IMR-90 (cell line): ENCODE measurements at regions of chr16 and their contacts with region 1.

Region 1: DNA sequence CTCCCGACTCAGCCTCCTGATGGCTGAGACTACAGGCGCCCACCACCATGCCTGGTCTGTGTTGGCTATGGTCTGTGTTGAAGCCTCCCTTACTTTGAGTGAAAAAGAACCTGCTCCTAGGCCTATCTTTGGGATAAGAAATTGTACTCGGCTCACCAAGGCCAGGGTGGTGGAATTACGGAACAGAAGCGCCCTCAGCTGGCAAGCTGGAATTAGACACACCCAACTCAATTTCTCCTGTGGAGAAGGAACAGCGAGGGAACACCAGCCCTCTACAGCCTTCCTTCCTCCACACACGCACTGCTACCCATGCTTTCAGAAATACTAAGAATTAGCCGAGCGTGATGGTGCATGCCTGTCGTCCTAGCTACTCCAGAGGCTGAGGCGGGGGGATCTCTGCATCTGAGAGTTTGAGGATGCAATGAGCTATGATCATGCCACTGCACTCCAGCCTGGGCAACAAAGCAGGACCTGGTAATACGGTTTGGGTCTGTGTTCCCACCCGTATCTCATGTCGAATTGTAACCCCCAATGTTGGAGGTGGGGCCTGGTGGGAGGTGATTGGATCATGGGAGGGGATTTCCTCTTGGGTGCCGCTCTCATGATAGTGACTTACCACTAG is 40.1 kb upstream of the RBBP6 start:
- DNase-seq: peak; percentile 11
- ATAC-seq: peak; percentile 74
- H3K4me3 ChIP-seq: no peak overlapping the region
- H3K27ac ChIP-seq: no peak overlapping the region
- H3K4me1 ChIP-seq: no peaks in the 10 kb centered on the region
- H3K27me3 ChIP-seq: peaks cover 3% of the 10 kb centered on the region; the same call in 1 of the 2 replicates
- CTCF ChIP-seq: peak; percentile 50
- POLR2A ChIP-seq: no peak
- RAD21 ChIP-seq: peak; percentile 55

Region 2: DNA sequence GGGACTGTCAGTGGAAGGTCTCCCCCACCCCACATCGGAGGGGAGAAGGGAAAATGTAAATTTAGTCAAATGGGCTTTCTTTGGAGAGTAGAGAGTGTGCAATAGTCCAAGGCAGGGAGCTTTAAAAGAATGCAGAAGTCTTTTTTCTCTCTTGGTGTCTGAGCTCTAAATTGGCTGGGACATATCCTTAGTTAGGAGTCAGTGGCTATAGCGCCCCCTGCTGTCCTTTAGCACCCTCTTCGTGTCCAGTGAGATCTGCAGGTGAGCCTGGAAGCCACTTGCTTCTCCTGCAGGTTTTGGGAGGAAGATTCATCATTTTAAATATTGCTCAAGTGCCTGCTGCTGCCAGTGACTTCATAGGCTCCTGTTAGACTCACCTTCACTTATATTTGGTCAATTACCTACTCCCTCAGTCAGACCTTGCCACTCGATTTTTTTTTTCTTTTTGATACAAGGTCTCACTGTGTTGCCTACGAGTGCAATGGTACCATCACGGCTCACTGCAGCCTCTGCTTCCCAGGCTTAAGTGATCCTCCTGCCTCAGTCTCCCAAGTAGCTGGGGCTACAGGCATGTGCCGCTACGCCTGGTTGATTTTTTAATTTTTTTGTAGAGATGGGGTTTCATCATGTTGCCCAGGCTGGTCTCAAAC is 488.7 kb before region 1 on chr16:
- CTCF ChIA-PET with region 1: no interaction called
- POLR2A ChIA-PET with region 1: no interaction called
- dilution Hi-C with region 1: no loop called
- in situ Hi-C with region 1: no loop called
- intact Hi-C with region 1: no loop called
- DNase-seq: peak; percentile 65
- ATAC-seq: peak; percentile 71
- H3K4me3 ChIP-seq: no peak overlapping the region
- H3K27ac ChIP-seq: no peak overlapping the region
- H3K4me1 ChIP-seq: no peaks in the 10 kb centered on the region
- H3K27me3 ChIP-seq: no peaks in the 10 kb centered on the region
- CTCF ChIP-seq: peak; percentile 69
- POLR2A ChIP-seq: no peak
- RAD21 ChIP-seq: peak; percentile 65

Region 3: DNA sequence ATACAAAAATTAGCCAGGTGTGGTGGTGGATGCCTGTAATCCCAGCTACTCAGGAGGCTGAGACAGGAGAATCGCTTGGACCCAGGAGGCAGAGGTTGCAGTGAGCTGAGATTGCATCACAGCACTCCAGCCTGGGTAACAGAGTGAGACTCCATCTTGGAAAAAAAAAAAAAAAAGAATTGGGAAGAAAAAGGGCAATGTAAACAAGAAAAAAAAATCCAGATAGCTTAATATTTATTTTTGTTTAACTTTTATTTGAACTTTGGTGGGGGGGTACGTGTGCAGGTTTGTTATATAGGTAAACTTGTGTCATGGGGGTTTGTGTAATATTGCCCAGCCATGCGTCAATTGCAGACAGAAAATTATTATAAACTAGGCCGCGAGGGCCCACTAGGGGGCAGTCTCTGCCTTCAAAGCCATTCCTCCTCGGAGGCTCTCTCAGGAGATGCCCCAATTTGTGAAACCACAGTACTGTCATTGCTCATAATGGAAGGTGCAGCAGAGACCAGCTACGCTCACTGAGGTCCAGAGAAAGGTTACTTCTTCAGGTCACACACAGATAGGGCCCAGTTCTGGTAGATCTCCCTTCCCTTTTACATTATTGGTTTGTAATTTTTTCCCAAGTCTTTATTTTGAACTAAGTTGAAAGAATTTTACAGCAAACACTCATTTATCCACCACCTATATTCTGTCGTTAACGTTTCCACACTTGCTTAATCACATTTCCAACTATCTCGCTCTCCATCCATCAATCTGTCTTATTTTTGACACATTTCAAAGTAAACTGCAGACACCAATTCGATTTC is 457.3 kb before region 1 on chr16:
- CTCF ChIA-PET with region 1: interaction called, 10 read pairs
- POLR2A ChIA-PET with region 1: no interaction called
- dilution Hi-C with region 1: no loop called
- in situ Hi-C with region 1: no loop called
- intact Hi-C with region 1: loop called (anchors 1 kb)
- DNase-seq: peak; percentile 48
- ATAC-seq: peak; percentile 83
- H3K4me3 ChIP-seq: no peak overlapping the region
- H3K27ac ChIP-seq: no peak overlapping the region
- H3K4me1 ChIP-seq: no peaks in the 10 kb centered on the region
- H3K27me3 ChIP-seq: no peaks in the 10 kb centered on the region
- CTCF ChIP-seq: peak; percentile 79
- POLR2A ChIP-seq: no peak
- RAD21 ChIP-seq: peak; percentile 75

Region 4: GRCh38 chr16:24452724-24453123 is 46.6 kb before region 1 on chr16:
- CTCF ChIA-PET with region 1: no interaction called
- POLR2A ChIA-PET with region 1: no interaction called
- dilution Hi-C with region 1: no loop called
- in situ Hi-C with region 1: no loop called
- intact Hi-C with region 1: no loop called
- DNase-seq: no peak
- ATAC-seq: no peak
- H3K4me3 ChIP-seq: no peak overlapping the region
- H3K27ac ChIP-seq: no peak overlapping the region
- H3K4me1 ChIP-seq: no peaks in the 10 kb centered on the region
- H3K27me3 ChIP-seq: no peaks in the 10 kb centered on the region
- CTCF ChIP-seq: no peak
- POLR2A ChIP-seq: no peak
- RAD21 ChIP-seq: no peak